Activated T-helper 1 cell treated with anti-CD3 and anti-CD28 coated beads, Interleukin-12 subunit alpha, Interleukin-12 subunit beta, Interleukin-2, Interleukin-4 antibody, amounts not matched to agents 30 ng/mL and 10 ng/mL and 1 ng/mL, durations not matched to agents 14 hours and 24 hours and 36 hours (primary cell): ENCODE measurements at regions of chr19 and their contacts with region 1.

Region 1: GRCh38 chr19:47047763-47048405 is 540 bp downstream of the TMEM160 start:
- DNase-seq: peak; percentile 74
- H3K4me3 Mint-ChIP-seq: peak overlapping the region; percentile 99
- H3K27ac Mint-ChIP-seq: peak overlapping the region; percentile 98
- H3K4me1 Mint-ChIP-seq: peaks cover 12% of the 10 kb centered on the region
- H3K27me3 Mint-ChIP-seq: no peaks in the 10 kb centered on the region

Region 2: GRCh38 chr19:47013041-47013517 is 34.8 kb before region 1 on chr19:
- intact Hi-C with region 1: loop called (anchors 1 kb)
- DNase-seq: peak; percentile 54
- H3K4me3 Mint-ChIP-seq: no peak overlapping the region
- H3K27ac Mint-ChIP-seq: no peak overlapping the region
- H3K4me1 Mint-ChIP-seq: peaks cover 11% of the 10 kb centered on the region
- H3K27me3 Mint-ChIP-seq: peaks cover 23% of the 10 kb centered on the region

Region 3: DNA sequence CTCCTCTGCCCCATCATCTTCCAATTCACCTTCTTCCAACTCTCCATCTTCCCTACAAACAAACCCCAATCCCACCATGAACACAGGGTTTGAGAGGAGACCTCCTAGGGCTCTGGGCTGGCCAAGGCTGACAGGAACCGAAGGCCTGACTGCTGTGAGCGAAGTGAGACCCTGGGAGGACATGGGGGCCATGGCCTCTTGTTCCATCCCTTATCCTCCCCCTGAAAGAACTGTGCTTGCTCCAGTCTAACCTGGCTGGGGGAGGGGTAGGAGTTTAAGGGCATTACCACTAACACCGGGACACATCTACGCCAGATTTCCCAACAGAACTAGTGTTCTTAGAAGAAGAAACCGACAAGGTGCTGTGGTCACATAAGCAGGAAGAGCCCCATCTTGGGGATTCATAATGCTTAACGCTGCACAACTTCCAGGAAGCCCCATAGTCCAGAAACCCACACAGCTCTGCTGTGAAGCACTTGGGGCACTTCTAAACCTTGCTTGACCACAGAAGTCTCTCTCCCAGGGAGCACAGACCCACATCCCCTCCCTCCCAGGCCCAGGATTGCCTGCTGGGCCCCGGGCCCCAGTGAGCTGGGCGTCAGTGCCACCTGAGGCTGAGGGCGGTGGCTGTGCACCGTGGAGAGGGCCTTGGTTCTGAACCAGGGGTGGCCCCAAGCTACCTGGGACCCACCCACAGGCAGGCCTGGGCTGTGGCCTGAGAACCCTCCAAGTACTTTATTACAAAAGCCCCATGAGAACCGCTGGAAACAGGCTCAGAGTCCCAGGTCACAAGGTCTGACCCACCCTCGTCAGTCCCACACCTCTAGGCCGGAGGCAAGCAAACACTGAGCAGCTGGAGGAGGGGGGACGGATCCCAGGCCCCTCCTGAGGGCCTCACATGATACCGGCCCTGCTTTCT is 46.9 kb after region 1 on chr19:
- intact Hi-C with region 1: loop called (anchors 5 kb)
- DNase-seq: peak; percentile 60
- H3K4me3 Mint-ChIP-seq: peak overlapping the region; percentile 93
- H3K27ac Mint-ChIP-seq: peak overlapping the region; percentile 99
- H3K4me1 Mint-ChIP-seq: peaks cover 72% of the 10 kb centered on the region
- H3K27me3 Mint-ChIP-seq: no peaks in the 10 kb centered on the region

Region 4: DNA sequence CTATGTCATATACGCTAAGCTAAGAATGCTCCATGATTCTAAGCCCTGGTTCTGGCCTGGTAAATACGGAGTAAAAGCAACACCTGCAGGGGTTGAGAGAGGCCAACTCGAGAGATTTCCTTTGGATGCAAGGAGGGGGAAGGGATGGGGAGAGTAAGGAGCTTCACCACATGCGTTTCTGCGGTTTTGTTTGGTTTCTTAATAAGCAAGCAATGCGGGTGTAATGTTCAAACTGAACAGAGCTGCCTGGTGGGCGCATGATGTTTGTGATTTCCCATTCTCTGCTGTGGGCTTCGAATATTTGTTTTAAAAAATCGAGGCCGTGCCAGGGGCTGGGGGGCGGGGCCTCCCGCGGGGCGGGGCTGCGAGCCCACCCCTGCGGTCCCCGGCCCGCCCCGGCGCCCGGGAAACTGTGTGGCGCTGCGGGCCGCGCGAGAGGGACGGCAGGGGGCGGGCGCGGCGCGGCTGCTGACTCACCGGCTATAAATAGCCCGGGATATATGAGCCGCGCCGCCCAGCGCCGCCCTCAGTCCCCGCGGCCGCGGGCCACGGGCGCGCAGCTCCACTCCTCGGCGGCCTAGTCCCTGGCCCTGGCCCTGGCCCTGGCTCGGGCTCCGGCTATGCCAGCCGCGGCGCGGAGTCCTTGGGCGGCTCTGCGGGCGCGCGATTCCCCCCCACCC is 178.0 kb after region 1 on chr19:
- intact Hi-C with region 1: loop called (anchors 2 kb)
- DNase-seq: peak; percentile 87
- H3K4me3 Mint-ChIP-seq: peak overlapping the region; percentile 38
- H3K27ac Mint-ChIP-seq: peak overlapping the region; percentile 82
- H3K4me1 Mint-ChIP-seq: peaks cover 6% of the 10 kb centered on the region
- H3K27me3 Mint-ChIP-seq: no peaks in the 10 kb centered on the region

Region 5: DNA sequence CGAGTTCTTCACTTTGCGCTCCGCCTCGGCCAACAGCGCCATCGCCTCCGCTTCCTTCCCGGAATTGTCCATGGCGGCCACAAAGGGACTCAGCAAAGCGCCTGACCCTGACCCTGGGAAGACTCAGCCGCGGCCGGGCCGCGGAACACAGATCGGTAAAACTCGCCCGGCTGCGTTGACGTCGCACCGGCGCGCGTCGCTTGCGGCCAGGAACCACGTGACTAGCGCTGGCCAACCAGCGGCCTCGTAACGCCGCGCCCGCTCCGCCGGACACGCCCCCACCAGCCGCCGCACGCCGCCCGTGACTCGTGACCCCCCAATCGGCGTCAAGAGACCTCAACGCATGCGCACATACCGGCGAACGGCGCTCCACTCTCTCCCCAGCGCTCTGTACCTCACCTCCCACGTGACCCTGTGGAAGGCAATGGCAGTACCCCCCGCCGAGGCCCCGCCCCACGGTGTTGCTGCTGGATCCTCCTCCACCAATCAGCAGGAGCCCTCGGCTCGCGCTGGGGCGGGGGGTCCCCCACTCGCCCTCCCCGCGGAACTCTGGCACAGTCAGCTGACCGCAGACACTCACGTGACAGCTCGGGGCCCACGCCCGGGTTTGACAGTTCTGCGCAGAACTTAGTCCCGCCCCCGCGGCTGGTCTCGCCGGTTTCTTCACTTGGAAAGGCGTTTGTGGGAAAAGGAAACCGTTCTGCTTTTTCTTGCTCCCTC is 467.1 kb after region 1 on chr19 and contains the start of gene NAPA:
- intact Hi-C with region 1: loop called (anchors 1 kb)
- DNase-seq: peak; percentile 100
- H3K4me3 Mint-ChIP-seq: peak within 1 kb of the TSS; percentile 95
- H3K27ac Mint-ChIP-seq: peak within 1 kb of the TSS; percentile 92
- H3K4me1 Mint-ChIP-seq: peaks cover 63% of the 10 kb centered on the region
- H3K27me3 Mint-ChIP-seq: peaks cover 4% of the 10 kb centered on the region
- total RNA-seq, gene NAPA: 66.4 and 68.7 TPM in 2 replicates